ENCODE measurements at regions of chr12 and their contacts with region 1.

Region 1: DNA sequence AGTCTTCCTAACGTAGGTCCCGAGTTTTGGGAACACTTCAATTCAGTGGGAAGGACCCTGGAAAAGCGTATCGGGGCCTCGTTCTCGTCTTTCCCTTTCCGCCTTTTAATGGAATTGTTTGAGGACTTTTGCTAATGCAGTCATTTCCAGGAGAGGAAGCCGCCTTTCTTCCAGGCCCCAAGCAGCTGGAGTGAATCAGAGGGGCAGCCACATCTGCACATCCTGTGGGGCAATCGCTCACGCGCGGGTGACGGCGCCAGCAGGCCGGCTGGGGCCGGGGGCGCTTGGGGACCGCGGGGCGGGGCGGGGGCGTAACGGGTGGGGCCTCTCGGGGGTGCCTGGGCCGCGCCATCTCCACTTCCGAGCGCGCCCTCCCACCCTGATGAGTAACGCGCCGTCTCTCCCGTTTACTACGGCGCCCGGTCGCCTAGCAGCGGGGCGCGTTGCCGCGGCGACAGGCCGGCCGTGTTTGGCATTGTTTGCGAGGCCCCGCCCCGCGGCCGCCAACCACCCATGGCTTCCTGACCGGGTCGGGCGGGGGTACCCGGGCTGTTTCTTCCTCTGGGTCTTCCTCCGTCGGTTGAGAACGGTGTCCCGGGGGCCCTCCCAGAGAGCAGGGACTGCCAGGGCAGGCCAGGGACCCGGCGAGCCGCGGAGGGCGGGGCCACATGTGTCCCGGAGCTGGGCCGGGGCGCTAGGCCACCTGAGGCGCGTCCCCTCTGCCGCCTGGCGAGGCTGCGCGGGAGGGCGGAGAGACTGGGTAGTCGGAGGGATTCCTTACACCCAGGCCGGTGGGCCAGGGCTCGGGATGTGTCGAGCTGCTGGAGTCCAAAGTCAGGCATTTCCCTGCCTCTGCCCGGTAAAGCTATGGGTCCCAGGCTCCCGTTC is 2.3 kb downstream of the GSG1 start:
- DNase-seq: peak; percentile 89 to 96
- H3K4me3 ChIP-seq: peak overlapping the region; percentile 79
- H3K4me3 Mint-ChIP-seq: peak overlapping the region; percentile 75
- H3K27ac Mint-ChIP-seq: peak overlapping the region; percentile 81
- H3K4me1 ChIP-seq: peaks cover 44% of the 10 kb centered on the region
- H3K4me1 Mint-ChIP-seq: peaks cover 47% of the 10 kb centered on the region
- H3K27me3 ChIP-seq: no peaks in the 10 kb centered on the region
- H3K27me3 Mint-ChIP-seq: no peaks in the 10 kb centered on the region
- CTCF ChIP-seq: no peak

Region 2: GRCh38 chr12:12916135-12916944 is 184.8 kb before region 1 on chr12:
- CTCF ChIA-PET with region 1: no interaction called
- POLR2A ChIA-PET with region 1: interaction called, 3 read pairs
- intact Hi-C with region 1: loop called (anchors 2 kb)
- DNase-seq: peak; percentile 87 to 92
- H3K4me3 ChIP-seq: no peak overlapping the region
- H3K4me3 Mint-ChIP-seq: no peak overlapping the region
- H3K27ac Mint-ChIP-seq: no peak overlapping the region
- H3K4me1 ChIP-seq: peaks cover 7% of the 10 kb centered on the region
- H3K4me1 Mint-ChIP-seq: peaks cover 24% of the 10 kb centered on the region
- H3K27me3 ChIP-seq: no peaks in the 10 kb centered on the region
- H3K27me3 Mint-ChIP-seq: no peaks in the 10 kb centered on the region
- CTCF ChIP-seq: peak; percentile 98 to 99

Region 3: DNA sequence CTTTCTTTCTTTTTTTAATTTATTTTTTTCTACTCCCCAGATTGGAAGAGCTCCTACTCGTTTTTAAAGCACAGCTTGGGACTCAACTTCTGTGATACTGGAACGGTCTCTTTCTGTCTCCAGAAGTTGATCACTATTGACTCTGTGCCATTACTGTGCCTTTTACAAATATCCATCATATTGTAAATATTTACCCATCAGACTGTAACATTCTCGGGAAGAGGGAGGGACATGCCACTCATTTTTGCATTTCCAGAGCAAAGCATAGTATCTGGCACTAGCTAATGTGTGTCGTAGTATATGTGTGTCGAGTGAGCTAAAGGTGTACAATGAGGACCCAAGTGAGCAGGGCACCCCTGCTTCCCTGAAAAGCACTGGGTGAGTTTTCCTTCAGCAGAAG is 26.3 kb after region 1 on chr12:
- CTCF ChIA-PET with region 1: interaction called, 5 read pairs
- POLR2A ChIA-PET with region 1: interaction called, 4 read pairs
- intact Hi-C with region 1: loop called (anchors 1 kb)
- DNase-seq: peak; percentile 56 to 59
- H3K4me3 ChIP-seq: no peak overlapping the region
- H3K4me3 Mint-ChIP-seq: peak overlapping the region; percentile 31
- H3K27ac Mint-ChIP-seq: peak overlapping the region; percentile 92
- H3K4me1 ChIP-seq: peaks cover 60% of the 10 kb centered on the region
- H3K4me1 Mint-ChIP-seq: peaks cover 46% of the 10 kb centered on the region
- H3K27me3 ChIP-seq: no peaks in the 10 kb centered on the region
- H3K27me3 Mint-ChIP-seq: no peaks in the 10 kb centered on the region
- CTCF ChIP-seq: no peak

Region 4: DNA sequence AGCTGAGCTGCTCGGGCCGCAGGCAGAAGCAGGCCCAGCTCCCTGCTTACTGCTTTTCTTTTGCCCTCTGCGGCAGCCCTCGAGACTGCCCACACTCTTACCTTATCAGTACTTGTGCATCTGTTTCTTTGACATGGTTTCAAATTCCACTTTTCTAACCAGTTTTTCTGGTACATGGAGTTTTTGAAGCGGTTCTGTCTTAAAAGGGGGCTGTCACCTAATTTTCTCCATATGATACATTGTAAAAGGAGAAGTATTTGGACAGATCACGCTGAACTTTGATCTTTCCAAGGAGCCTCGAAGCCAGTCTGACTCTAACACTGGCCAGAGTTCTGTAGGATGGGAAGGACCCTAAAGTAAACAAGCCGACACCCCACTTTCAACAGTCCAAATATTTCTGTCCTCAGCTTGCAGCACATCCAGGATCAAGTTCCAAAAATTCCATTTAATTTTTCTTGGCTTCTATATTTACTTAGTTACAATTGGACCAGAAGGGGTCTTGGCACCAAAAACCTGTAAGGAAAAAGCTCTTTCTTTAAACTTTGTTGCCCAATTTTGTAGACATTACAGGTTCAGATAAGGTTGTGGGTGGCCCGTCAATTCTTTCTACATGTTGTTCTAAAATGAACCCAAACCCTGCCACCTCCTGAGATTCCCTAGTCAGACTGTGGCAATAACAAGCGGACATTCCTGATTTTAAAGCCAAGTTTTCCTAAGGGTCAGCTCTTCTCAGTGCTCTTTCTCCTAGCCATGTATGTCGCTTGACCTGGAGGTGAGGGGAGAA is 47.1 kb after region 1 on chr12:
- CTCF ChIA-PET with region 1: no interaction called
- POLR2A ChIA-PET with region 1: interaction called, 5 read pairs
- intact Hi-C with region 1: loop called (anchors 1 kb)
- DNase-seq: peak; percentile 78 to 79
- H3K4me3 ChIP-seq: no peak overlapping the region
- H3K4me3 Mint-ChIP-seq: peak overlapping the region; percentile 37
- H3K27ac Mint-ChIP-seq: peak overlapping the region; percentile 29
- H3K4me1 ChIP-seq: peaks cover 50% of the 10 kb centered on the region
- H3K4me1 Mint-ChIP-seq: peaks cover 45% of the 10 kb centered on the region
- H3K27me3 ChIP-seq: no peaks in the 10 kb centered on the region
- H3K27me3 Mint-ChIP-seq: no peaks in the 10 kb centered on the region
- CTCF ChIP-seq: no peak

Region 5: DNA sequence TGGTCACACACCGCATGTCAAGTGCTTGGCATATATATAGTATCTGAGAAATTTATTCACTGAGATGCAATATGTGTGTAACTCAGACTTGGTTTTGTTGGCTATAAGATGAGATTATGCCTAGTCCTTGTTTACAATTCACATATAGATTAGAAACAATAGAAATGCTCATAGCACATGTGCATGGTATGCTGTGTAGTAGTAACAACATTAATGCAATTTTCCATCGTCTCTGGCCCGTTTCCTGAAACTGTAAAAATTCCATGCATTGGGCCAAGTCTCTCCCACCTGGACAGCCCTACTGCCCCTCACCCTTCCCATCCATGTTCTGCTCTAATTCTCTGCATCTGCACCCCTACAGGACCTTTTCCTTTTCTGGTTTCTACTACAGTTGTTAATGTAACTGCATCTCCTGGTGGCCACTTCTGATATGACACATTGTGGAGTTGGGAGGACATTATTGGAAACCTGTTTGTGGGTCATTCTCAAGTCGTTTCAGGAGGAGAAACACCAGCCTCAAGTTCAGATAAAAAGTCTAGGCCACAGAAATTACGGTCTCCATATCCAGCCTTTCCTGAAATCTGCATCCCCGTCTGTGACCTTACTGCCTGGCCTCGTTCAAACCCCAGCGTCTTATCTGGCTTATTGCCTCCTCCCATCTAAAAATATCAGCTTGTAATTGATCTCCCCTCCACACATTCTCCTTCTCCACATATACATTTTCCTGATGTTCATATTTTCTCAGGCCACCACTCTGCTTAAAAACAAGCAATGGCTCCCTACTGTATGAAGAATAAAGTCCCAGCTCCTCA is 132.9 kb after region 1 on chr12:
- CTCF ChIA-PET with region 1: no interaction called
- POLR2A ChIA-PET with region 1: no interaction called
- intact Hi-C with region 1: loop called (anchors 1 kb)
- DNase-seq: peak; percentile 58 to 75
- H3K4me3 ChIP-seq: no peak overlapping the region
- H3K4me3 Mint-ChIP-seq: no peak overlapping the region
- H3K27ac Mint-ChIP-seq: no peak overlapping the region
- H3K4me1 ChIP-seq: no peaks in the 10 kb centered on the region
- H3K4me1 Mint-ChIP-seq: peaks cover 13% of the 10 kb centered on the region
- H3K27me3 ChIP-seq: no peaks in the 10 kb centered on the region
- H3K27me3 Mint-ChIP-seq: peaks cover 4% of the 10 kb centered on the region
- CTCF ChIP-seq: peak; percentile 95 to 96

Region 6: GRCh38 chr12:13947276-13947946 is 846.3 kb after region 1 on chr12:
- CTCF ChIA-PET with region 1: no interaction called
- POLR2A ChIA-PET with region 1: no interaction called
- intact Hi-C with region 1: no loop called
- DNase-seq: no peak
- H3K4me3 ChIP-seq: no peak overlapping the region
- H3K4me3 Mint-ChIP-seq: no peak overlapping the region
- H3K27ac Mint-ChIP-seq: no peak overlapping the region
- H3K4me1 ChIP-seq: peaks cover 50% of the 10 kb centered on the region
- H3K4me1 Mint-ChIP-seq: peaks cover 43% of the 10 kb centered on the region
- H3K27me3 ChIP-seq: no peaks in the 10 kb centered on the region
- H3K27me3 Mint-ChIP-seq: no peaks in the 10 kb centered on the region
- CTCF ChIP-seq: no peak

Measured in Caco-2 (cell line).